ENCODE measurements at regions of chr6 and their contacts with region 1.

Region 1: DNA sequence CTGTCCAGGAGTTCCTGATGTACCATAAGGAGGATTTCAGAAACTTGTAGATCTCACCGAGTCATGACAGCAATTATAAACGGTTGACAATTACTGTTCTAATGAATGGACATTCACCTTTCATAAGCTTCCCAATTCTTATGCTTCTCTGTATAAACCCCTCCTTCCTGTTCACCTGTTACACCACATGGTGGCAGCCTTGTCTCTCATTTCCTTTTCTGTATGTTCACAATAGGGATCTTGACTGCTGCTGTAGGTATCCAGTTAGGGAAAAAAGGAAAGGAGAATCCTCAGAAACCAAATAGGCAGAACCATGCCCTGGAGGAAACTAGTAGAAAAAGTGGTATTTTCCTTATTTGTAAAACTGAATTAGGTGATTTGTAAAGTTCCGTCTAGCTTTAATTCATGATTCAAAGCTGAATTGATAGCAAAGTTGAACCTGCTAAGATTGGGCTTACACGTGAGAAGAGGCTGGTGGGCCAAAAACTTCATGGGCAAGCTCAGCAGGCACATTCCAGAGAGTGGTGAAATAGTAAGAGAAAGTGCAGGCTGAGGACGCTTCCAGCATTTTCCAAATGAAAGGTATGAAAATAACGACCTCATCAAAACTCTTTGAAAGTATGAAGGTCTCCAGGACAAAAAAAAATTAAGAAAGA is 29.0 kb upstream of the TBPL1 start:
- DNase-seq: peak; percentile 74
- H3K4me3 Mint-ChIP-seq: no peak overlapping the region
- H3K27ac Mint-ChIP-seq: no peak overlapping the region
- H3K4me1 Mint-ChIP-seq: no peaks in the 10 kb centered on the region
- H3K27me3 Mint-ChIP-seq: peaks cover 19% of the 10 kb centered on the region

Region 2: GRCh38 chr6:133837801-133838349 is 86.2 kb before region 1 on chr6:
- CTCF ChIA-PET with region 1: interaction called, 11 read pairs
- intact Hi-C with region 1: no loop called
- DNase-seq: peak; percentile 75
- H3K4me3 Mint-ChIP-seq: peak overlapping the region; percentile 55
- H3K27ac Mint-ChIP-seq: no peak overlapping the region
- H3K4me1 Mint-ChIP-seq: peaks cover 5% of the 10 kb centered on the region
- H3K27me3 Mint-ChIP-seq: peaks cover 20% of the 10 kb centered on the region

Region 3: DNA sequence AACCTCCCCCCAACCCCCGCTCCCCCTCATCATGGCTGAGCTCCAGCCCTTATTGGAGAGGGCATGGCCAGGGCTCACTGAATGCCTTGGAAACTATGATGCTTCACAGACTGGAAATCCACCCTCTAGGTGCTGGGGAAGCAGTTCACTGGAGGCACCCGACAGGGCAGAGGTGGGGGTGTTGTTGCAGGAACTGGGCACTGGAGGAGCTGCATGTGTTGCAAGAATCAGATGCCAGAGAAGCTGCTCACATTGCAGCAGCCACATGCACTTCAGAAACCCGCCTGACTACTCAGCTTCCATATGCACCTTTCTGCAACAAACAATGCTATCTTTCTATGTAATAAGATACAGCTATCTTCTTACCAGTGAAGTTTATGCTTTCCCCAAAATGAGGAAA is 21.1 kb after region 1 on chr6:
- CTCF ChIA-PET with region 1: interaction called, 14 read pairs
- intact Hi-C with region 1: no loop called
- DNase-seq: no peak
- H3K4me3 Mint-ChIP-seq: no peak overlapping the region
- H3K27ac Mint-ChIP-seq: no peak overlapping the region
- H3K4me1 Mint-ChIP-seq: no peaks in the 10 kb centered on the region
- H3K27me3 Mint-ChIP-seq: peaks cover 4% of the 10 kb centered on the region

Region 4: DNA sequence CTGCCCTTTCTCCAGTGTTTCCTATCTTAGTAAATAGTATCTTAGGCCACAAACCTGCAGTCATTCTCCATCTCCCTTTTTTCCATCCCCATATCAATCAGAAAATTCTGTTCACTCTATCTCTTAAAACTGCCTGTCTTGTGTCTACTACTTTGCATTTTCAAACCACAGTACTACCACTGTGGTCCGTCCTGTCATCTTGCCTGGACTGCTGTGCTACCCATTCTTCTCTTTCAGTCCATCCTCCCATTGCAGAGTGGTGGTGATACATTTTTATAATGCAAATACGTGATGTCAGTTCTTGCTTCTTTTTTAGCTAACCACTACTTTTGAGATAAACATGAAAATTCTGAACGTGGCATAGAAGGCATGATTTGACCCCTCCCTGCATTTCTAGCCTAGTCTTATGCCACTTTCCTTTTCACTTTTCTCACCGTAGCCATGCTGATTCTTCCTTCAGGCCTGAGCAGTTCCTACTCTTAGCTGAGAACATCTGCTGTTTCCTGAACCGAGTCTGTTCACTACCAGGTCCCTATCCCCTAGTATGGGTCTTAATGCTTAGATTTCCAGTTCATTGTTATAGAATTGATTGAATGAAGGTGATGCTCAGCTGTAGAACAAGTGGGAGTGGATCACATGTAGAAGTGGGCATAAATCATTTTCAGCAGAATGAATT is 42.7 kb after region 1 on chr6:
- CTCF ChIA-PET with region 1: interaction called, 19 read pairs
- intact Hi-C with region 1: no loop called
- DNase-seq: no peak
- H3K4me3 Mint-ChIP-seq: no peak overlapping the region
- H3K27ac Mint-ChIP-seq: no peak overlapping the region
- H3K4me1 Mint-ChIP-seq: peaks cover 64% of the 10 kb centered on the region
- H3K27me3 Mint-ChIP-seq: no peaks in the 10 kb centered on the region

Region 5: DNA sequence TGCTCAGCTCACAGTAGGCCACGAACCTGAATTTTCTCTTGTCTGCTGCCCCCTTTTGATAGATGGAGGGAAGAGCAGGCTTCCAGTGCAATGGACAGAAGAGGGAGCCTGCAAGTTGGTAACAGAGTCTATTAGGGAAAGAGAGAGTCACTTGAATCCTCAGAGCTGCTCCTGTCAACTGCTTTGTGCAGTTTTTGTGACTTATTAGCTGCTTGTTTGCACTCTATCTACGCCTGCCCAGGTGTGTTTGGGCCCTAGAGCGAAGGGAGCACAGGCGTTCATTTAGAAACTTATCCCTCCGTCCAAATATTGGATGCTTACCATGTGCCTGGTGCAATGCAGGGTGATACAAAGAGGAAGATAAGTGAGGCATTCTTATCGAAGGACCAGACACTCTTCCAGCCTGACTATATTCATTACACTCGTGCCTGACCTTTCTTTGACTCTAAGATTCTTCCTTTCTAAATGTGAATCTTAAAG is 139.9 kb after region 1 on chr6:
- CTCF ChIA-PET with region 1: interaction called, 161 read pairs
- intact Hi-C with region 1: loop called (anchors 1 kb)
- DNase-seq: peak; percentile 74
- H3K4me3 Mint-ChIP-seq: no peak overlapping the region
- H3K27ac Mint-ChIP-seq: no peak overlapping the region
- H3K4me1 Mint-ChIP-seq: no peaks in the 10 kb centered on the region
- H3K27me3 Mint-ChIP-seq: no peaks in the 10 kb centered on the region

Region 6: DNA sequence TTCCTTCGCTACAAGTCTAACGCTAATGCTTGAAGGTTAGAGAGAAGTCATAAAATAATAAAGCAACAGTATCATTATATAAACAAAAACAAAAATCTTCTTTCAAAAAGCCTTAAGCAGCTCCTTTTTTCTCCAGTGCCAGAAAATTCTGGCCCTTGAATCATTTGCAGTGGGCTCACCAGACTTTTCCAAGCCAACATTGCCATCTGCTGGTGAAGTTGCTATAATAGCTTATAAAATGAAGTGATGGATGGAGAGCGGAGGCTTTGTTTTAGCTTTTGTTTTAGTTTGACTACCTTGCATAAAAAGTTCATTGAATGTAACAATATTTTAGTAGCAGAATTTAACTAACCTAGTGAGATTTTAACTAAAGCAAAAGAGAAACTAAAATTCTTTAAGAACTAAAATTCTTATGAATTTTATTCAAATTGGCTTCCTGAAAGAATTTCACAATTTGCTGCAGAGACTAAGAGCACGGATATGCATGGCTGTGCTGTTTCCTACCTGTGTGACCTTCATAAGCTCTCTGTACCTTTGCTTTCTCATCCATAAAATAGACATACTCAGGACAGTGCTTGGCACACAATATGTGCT is 173.1 kb after region 1 on chr6:
- CTCF ChIA-PET with region 1: interaction called, 205 read pairs
- intact Hi-C with region 1: loop called (anchors 1 kb)
- DNase-seq: peak; percentile 80
- H3K4me3 Mint-ChIP-seq: no peak overlapping the region
- H3K27ac Mint-ChIP-seq: no peak overlapping the region
- H3K4me1 Mint-ChIP-seq: no peaks in the 10 kb centered on the region
- H3K27me3 Mint-ChIP-seq: peaks cover 7% of the 10 kb centered on the region

Measured in activated naive CD4-positive, alpha-beta T cell treated with anti-CD3 and anti-CD28 coated beads for 36 hours (primary cell).